Adrenal gland (tissue), 19 donors: ENCODE measurements at regions of chr17 and their contacts with region 1.

Region 1: DNA sequence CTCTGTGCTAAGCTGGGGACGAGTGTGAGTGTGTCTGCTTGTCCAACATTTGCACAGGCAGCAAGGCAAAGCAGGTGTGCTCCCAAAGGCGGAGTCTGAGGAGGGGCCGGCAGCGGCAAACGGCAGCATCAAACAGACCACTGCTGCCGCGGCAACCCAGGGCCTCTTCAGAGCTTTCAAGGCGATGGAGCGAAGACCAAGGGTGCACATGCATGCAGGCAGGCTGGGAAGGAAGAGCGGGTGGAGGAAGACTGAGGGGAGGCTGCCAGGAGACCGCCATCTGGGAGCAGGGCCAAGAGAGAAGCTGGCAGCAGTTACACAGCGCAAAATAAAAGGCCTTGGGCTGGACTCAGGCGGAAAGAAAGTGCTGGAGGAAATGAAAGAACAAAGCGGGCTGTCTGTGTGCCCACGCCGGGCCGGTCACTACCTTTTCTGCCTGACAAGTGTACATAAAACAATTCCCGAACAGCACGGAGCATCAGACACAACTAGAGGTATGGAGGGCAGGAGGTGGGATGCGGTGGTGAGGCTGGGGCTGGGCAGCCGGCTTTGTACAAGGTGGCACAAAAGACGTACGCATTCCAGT is 8.5 kb downstream of the TIMM22 start:
- DNase-seq: peak; percentile 81 to 90 (median 88)
- H3K4me3 ChIP-seq: peak overlapping the region in 1 of 4 donors; percentile 25
- H3K27ac ChIP-seq: peak overlapping the region; percentile 44 to 96 (median 74)
- H3K4me1 ChIP-seq: peaks cover 32 to 60% of the 10 kb centered on the region in 2 donors
- H3K27me3 ChIP-seq: no peaks in the 10 kb centered on the region
- CTCF ChIP-seq: no peak
- POLR2A ChIP-seq: peak in 1 of 2 donors; percentile 48

Region 2: GRCh38 chr17:1047177-1047878 is 41.9 kb after region 1 on chr17:
- intact Hi-C with region 1: loop called in 1 of 2 experiments (anchors 5 kb)
- DNase-seq: no peak
- H3K4me3 ChIP-seq: no peak overlapping the region
- H3K27ac ChIP-seq: peak overlapping the region in 2 of 5 donors; percentile 8 to 45
- H3K4me1 ChIP-seq: no peaks in the 10 kb centered on the region
- H3K27me3 ChIP-seq: no peaks in the 10 kb centered on the region
- CTCF ChIP-seq: no peak
- POLR2A ChIP-seq: no peak

Region 3: GRCh38 chr17:1055751-1056645 is 50.5 kb after region 1 on chr17:
- intact Hi-C with region 1: loop called in 1 of 2 experiments (anchors 5 kb)
- DNase-seq: peak; percentile 55 to 90 (median 69)
- H3K4me3 ChIP-seq: no peak overlapping the region
- H3K27ac ChIP-seq: no peak overlapping the region
- H3K4me1 ChIP-seq: no peaks in the 10 kb centered on the region
- H3K27me3 ChIP-seq: no peaks in the 10 kb centered on the region
- CTCF ChIP-seq: peak; percentile 54 to 83 (median 78)
- POLR2A ChIP-seq: no peak